ENCODE measurements at regions of chr3 and their contacts with region 1.

Region 1: GRCh38 chr3:138594150-138594934 is at the start of gene CEP70:
- DNase-seq: peak; percentile 86
- H3K4me3 Mint-ChIP-seq: peak within 1 kb of the TSS; percentile 90
- H3K27ac Mint-ChIP-seq: peak within 1 kb of the TSS; percentile 99
- H3K4me1 Mint-ChIP-seq: peaks cover 9% of the 10 kb centered on the region
- H3K27me3 Mint-ChIP-seq: no peaks in the 10 kb centered on the region
- total RNA-seq, gene CEP70: 7.2 and 7.7 TPM in 2 replicates

Region 2: DNA sequence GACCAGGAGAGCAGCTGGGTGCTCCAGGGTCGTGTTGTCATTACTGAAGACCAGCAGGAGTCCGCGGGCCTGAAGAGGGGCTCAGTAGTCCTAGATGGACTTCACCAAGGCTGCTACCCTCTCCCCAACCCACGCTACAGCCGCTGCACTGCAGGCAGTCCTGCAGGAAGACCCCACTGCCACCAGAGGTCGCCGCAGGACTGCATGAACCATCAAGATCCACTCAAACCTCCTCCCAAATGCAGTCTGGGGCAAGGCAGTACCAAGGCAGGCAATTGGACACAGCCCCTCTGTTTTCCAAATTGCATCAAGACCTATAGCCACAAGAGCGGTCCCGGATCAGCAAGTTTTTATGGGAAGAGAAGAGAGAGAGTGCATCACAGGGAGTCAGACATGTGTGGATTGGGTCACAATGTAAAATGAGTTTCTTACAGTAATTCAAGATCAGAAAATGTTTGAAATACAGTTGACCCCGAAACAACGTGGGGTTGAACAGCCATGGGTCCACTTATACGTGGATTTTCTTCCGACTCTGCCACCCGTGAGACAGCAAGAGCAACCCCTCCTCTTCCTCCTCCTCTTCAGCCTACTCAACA is 525.7 kb before region 1 on chr3:
- intact Hi-C with region 1: loop called (anchors 5 kb)
- DNase-seq: peak; percentile 55
- H3K4me3 Mint-ChIP-seq: no peak overlapping the region
- H3K27ac Mint-ChIP-seq: no peak overlapping the region
- H3K4me1 Mint-ChIP-seq: peaks cover 23% of the 10 kb centered on the region
- H3K27me3 Mint-ChIP-seq: peaks cover 29% of the 10 kb centered on the region

Region 3: GRCh38 chr3:138314751-138315150 is 279.6 kb before region 1 on chr3:
- intact Hi-C with region 1: no loop called
- DNase-seq: no peak
- H3K4me3 Mint-ChIP-seq: no peak overlapping the region
- H3K27ac Mint-ChIP-seq: no peak overlapping the region
- H3K4me1 Mint-ChIP-seq: no peaks in the 10 kb centered on the region
- H3K27me3 Mint-ChIP-seq: peaks cover 17% of the 10 kb centered on the region

Region 4: DNA sequence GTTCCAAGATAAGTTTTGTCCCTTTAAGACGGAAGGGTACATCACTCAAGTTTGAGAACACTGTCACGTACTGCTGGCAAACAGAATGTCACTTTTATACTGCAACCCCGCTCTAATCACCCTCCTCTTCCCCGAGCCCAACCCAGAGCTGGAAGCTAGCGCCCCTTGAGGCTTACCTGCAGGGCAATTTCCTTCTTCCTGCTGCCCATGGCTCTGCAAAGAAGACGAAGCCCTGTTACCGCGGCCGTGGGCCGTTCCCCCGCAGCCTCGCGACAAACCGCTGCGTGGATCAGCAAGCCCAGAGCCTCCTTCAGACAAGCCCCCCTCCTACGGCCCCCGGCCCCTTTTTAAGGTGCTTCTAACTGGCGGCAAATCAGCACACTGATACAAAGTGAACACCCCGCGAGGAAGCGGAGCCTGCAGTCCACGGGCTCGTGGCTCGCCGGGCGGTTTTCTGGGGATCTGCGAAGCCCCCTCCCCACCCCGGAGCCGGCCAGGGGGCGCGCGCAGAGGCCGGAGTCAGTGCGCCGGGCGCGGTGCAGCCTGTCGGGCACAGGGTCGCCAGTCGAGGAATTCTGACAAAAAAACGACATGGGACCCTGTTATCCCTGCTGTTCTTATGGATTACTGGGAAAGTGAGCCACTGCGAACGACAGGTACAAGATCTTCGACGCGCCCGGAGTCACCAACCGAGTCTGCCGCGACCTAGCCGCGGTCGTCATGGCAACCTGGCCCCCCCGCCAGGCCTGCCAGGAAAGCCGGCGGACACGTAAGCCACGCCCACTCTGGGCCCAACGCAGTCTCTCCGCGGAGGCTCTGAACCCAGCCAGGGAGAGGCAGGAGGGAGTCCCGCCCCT is 265.0 kb before region 1 on chr3 and contains the start of gene NME9:
- intact Hi-C with region 1: loop called (anchors 10 kb)
- DNase-seq: peak; percentile 77
- H3K4me3 Mint-ChIP-seq: peak within 1 kb of the TSS; percentile 83
- H3K27ac Mint-ChIP-seq: peak within 1 kb of the TSS; percentile 63
- H3K4me1 Mint-ChIP-seq: peaks cover 19% of the 10 kb centered on the region
- H3K27me3 Mint-ChIP-seq: peaks cover 13% of the 10 kb centered on the region
- total RNA-seq, gene NME9: 0.30 TPM in 1 of 2 replicates, not detected in the other

Region 5: DNA sequence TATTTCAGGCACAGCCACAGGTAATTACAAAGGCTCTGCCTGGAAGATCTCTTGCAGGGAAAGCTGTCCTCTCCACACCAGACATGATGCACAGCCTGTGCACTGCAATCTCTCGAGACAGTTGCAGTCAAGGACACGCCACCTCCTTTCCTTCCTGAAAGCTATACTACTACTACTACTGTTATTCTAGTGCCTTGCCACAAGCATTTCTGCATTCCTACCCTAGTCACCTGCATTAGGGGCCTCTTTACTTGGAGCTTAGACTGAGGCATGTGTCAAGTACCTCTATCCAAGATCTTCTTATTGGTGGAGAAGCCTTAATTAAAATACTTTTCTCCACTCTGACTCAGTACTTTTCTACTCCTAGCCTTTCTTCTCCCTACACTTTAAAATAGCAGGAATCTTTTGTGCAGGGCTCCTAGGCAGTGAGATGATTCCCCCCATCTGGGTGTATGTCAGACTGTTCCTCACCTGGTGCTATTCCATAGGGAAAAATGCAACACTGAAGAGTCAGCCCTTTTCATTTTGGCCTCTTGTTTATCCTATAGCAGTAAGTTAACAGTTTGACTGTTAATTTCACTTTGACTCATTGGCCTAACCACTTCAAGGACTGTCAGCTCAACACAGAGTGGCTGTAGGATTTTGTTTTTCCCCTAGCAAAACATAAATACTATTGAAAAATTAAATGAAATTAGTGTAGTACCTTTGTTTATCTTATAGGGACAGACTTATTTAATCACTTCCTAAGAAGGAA is 81.1 kb before region 1 on chr3:
- intact Hi-C with region 1: loop called (anchors 5 kb)
- DNase-seq: no peak
- H3K4me3 Mint-ChIP-seq: no peak overlapping the region
- H3K27ac Mint-ChIP-seq: peak overlapping the region; percentile 42
- H3K4me1 Mint-ChIP-seq: peaks cover 25% of the 10 kb centered on the region
- H3K27me3 Mint-ChIP-seq: no peaks in the 10 kb centered on the region

Region 6: GRCh38 chr3:138686771-138687221 is 92.5 kb after region 1 on chr3:
- intact Hi-C with region 1: loop called (anchors 5 kb)
- DNase-seq: no peak
- H3K4me3 Mint-ChIP-seq: no peak overlapping the region
- H3K27ac Mint-ChIP-seq: peak overlapping the region; percentile 35
- H3K4me1 Mint-ChIP-seq: peaks cover 13% of the 10 kb centered on the region
- H3K27me3 Mint-ChIP-seq: no peaks in the 10 kb centered on the region

Region 7: DNA sequence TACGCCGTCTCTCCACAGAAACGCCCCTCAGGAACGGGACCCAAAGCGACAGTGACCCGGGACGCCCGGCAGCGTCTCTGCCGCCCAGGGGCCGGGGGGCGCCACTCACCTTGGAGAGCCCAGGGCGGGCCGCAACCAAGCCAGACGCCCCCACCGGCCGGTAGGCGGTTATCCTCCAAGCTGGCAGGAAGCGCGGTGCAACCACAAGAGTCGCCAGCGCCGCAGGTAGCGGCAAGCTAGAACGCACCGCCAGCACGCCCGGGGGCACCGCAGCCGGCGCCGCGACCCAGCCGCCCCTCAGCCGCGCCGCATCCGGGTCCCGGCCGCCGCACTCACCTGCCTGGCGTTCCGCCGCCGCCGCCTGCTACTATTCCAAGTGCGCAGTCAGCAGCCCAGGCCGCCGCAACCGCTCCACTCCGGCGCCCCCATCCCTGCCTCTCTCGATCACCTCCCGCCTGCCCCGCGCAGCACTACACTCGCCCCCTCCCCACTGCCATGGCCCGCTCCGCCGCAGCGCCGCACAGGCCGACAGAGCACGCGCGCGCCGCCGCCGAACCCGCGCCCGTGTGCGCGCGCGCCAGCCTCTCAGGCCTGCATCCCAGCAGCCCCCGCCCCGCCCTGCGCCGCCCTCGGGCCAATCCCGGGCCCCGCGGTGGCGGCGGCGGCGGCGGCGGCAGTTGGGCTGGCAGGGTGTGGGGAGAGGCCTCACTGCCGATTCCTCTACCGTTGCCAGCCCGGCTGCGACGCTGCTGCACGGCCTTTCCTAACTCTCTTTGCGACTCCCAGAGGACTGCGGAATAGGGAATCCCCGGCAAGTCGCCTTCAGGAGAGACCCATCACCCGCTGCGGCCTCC is 240.2 kb after region 1 on chr3 and contains the start of gene PIK3CB:
- intact Hi-C with region 1: loop called (anchors 2 kb)
- DNase-seq: peak; percentile 77
- H3K4me3 Mint-ChIP-seq: peak within 1 kb of the TSS; percentile 96
- H3K27ac Mint-ChIP-seq: peak within 1 kb of the TSS; percentile 94
- H3K4me1 Mint-ChIP-seq: peaks cover 16% of the 10 kb centered on the region
- H3K27me3 Mint-ChIP-seq: no peaks in the 10 kb centered on the region
- total RNA-seq, gene PIK3CB: 19.2 and 20.3 TPM in 2 replicates

Region 8: GRCh38 chr3:138923531-138923994 is 329.2 kb after region 1 on chr3:
- intact Hi-C with region 1: loop called (anchors 1 kb)
- DNase-seq: peak; percentile 72
- H3K4me3 Mint-ChIP-seq: no peak overlapping the region
- H3K27ac Mint-ChIP-seq: no peak overlapping the region
- H3K4me1 Mint-ChIP-seq: peaks cover 2% of the 10 kb centered on the region
- H3K27me3 Mint-ChIP-seq: peaks cover 11% of the 10 kb centered on the region

Measured in activated T-helper 2 cell treated with anti-CD3 and anti-CD28 coated beads, Interferon-gamma antibody, Interleukin-2, Interleukin-4, amounts not matched to agents 10 μg/mL and 5 μg/mL and 100 μg/mL, durations not matched to agents 14 hours and 24 hours and 36 hours (primary cell).